ENCODE measurements at regions of chr15 and their contacts with region 1.

Region 1: GRCh38 chr15:45268135-45268534 is 16.1 kb downstream of the SLC28A2 start:
- DNase-seq: peak; percentile 59 to 73 (median 65)
- ATAC-seq: peak; percentile 83 to 96 (median 91)
- H3K4me3 ChIP-seq: no peak overlapping the region
- H3K27ac ChIP-seq: no peak overlapping the region
- H3K4me1 ChIP-seq: peaks cover 0 to 5% (median 0%) of the 10 kb centered on the region in 4 donors
- H3K27me3 ChIP-seq: no peaks in the 10 kb centered on the region
- CTCF ChIP-seq: peak; percentile 49 to 69 (median 57)
- POLR2A ChIP-seq: no peak

Region 2: GRCh38 chr15:45083223-45083622 is 184.9 kb before region 1 on chr15:
- intact Hi-C with region 1: no loop called
- DNase-seq: no peak
- ATAC-seq: peak in 3 of 4 donors; percentile 58 to 85 (median 80)
- H3K4me3 ChIP-seq: no peak overlapping the region
- H3K27ac ChIP-seq: no peak overlapping the region
- H3K4me1 ChIP-seq: peaks cover 0 to 5% (median 0%) of the 10 kb centered on the region in 4 donors
- H3K27me3 ChIP-seq: no peaks in the 10 kb centered on the region
- CTCF ChIP-seq: no peak
- POLR2A ChIP-seq: no peak

Region 3: GRCh38 chr15:45166834-45167630 is 101.1 kb before region 1 on chr15:
- intact Hi-C with region 1: loop called in 1 of 2 experiments (anchors 10 kb)
- DNase-seq: peak; percentile 85 to 88 (median 87)
- ATAC-seq: peak; percentile 77 to 84 (median 80)
- H3K4me3 ChIP-seq: peak overlapping the region; percentile 58 to 78 (median 70)
- H3K27ac ChIP-seq: peak overlapping the region; percentile 93 to 96 (median 94)
- H3K4me1 ChIP-seq: peaks cover 0 to 4% (median 0%) of the 10 kb centered on the region in 4 donors
- H3K27me3 ChIP-seq: no peaks in the 10 kb centered on the region
- CTCF ChIP-seq: peak; percentile 46 to 54 (median 52)
- POLR2A ChIP-seq: peak; percentile 60

Region 4: DNA sequence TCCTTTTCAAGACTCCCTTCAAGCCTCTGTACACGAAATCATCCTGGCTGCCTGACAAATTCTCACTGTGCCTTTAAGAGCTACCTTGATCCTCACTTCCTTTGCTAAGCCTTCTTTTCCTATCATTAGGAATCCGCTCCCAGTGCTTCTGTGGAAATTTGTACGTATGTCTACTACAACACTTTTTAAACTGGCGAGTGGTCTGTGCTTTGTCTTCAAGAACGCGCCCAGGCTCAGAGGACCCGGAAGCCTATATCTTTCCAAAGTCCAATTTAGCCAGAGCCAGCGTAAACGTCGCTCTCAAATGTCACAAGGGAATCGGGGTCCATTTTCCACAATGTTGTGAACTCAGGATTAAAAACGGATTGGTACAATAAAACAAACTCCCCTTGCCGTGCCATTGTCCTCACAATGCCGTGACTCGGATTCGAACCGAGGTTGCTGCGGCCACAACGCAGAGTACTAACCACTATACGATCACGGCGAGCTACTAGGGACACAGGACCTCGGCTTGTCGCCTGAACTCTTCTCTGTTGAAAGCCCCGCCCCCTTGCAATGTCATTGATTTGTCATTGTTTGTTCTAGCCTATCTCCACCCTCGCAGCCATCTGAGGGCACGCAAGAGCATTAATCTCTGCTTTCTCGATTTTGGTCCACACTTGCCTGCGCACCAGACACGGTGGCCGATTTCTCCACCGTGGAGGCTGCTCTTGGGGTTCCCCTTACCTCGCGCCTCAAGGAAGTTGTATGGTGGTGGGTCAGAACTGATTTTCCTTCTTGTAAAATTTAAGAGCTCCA is 67.9 kb before region 1 on chr15:
- intact Hi-C with region 1: loop called in 1 of 2 experiments (anchors 10 kb)
- DNase-seq: peak; percentile 91 to 97 (median 93)
- ATAC-seq: peak; percentile 70 to 81 (median 78)
- H3K4me3 ChIP-seq: peak overlapping the region; percentile 50 to 73 (median 71)
- H3K27ac ChIP-seq: peak overlapping the region; percentile 93 to 100 (median 94)
- H3K4me1 ChIP-seq: peaks cover 0 to 22% (median 5%) of the 10 kb centered on the region in 4 donors
- H3K27me3 ChIP-seq: no peaks in the 10 kb centered on the region
- CTCF ChIP-seq: no peak
- POLR2A ChIP-seq: peak; percentile 89